Aorta (tissue), 5 donors: ENCODE measurements at regions of chr9 and their contacts with region 1.

Region 1: GRCh38 chr9:34989003-34989945 is at the start of gene DNAJB5:
- DNase-seq: peak; percentile 99
- ATAC-seq: peak; percentile 94
- H3K4me3 ChIP-seq: peak within 1 kb of the TSS; percentile 80 to 92
- H3K27ac ChIP-seq: peak within 1 kb of the TSS; percentile 98
- H3K4me1 ChIP-seq: no peaks in the 10 kb centered on the region
- H3K27me3 ChIP-seq: no peaks in the 10 kb centered on the region
- total RNA-seq, gene DNAJB5: 33.7 to 96.0 TPM

Region 2: GRCh38 chr9:34651876-34652601 is 337.2 kb before region 1 on chr9 and contains the start of gene IL11RA:
- intact Hi-C with region 1: loop called in 1 of 2 experiments (anchors 10 kb)
- DNase-seq: peak; percentile 92 to 94
- ATAC-seq: peak; percentile 78
- H3K4me3 ChIP-seq: peak within 1 kb of the TSS; percentile 24 to 47
- H3K27ac ChIP-seq: peak within 1 kb of the TSS; percentile 70 to 72
- H3K4me1 ChIP-seq: peaks cover 0 to 2% of the 10 kb centered on the region in 2 donors
- H3K27me3 ChIP-seq: no peaks in the 10 kb centered on the region
- total RNA-seq, gene IL11RA: 33.7 to 66.4 TPM

Region 3: DNA sequence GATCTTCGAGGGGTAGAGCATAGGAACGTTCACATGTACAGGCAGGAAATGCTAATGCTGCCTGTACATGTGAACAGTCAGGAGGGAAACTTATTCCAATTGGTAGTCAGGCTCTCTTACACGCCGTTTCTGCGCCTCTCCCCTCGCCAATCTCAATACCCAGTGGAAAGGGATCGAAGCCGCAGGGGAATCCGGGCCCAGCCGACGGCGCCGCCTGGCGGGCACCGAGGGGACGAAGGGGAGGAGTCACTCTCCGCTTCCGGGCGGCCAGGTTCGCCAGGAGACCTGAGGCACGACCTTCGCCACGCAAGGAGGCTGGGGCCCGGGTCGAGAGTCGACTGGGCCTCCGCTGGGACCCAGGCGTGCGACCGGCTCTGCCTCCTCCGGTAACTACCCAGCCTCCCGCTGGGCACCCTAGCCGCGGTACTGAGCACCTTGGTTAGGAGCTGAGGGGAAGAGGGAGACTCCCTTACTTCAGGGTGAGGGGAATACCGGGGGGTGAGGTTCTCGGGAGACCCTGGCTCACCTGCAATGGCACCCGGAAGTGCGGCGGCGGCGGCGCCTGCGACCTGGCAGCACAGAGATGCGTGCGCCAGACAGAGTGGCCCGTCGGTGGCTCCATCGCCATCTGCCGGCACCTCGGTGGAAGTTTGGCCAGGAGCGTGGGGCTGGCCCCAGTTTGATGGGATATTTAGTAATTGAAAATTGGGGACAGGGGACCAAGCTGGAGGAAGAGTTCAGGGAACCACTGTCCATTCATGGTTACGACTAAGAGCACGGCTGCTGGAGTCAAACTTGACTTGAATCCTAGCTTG is 107.0 kb after region 1 on chr9 and contains the start of gene PIGO:
- intact Hi-C with region 1: loop called in 1 of 2 experiments (anchors 5 kb)
- DNase-seq: peak; percentile 94 to 96
- ATAC-seq: peak; percentile 95
- H3K4me3 ChIP-seq: peak within 1 kb of the TSS; percentile 85 to 88
- H3K27ac ChIP-seq: peak within 1 kb of the TSS; percentile 80 to 99
- H3K4me1 ChIP-seq: no peaks in the 10 kb centered on the region
- H3K27me3 ChIP-seq: no peaks in the 10 kb centered on the region
- total RNA-seq, gene PIGO: 12.0 to 16.8 TPM